HCT116 (cell line): ENCODE measurements at regions of chr15 and their contacts with region 1.

Region 1: DNA sequence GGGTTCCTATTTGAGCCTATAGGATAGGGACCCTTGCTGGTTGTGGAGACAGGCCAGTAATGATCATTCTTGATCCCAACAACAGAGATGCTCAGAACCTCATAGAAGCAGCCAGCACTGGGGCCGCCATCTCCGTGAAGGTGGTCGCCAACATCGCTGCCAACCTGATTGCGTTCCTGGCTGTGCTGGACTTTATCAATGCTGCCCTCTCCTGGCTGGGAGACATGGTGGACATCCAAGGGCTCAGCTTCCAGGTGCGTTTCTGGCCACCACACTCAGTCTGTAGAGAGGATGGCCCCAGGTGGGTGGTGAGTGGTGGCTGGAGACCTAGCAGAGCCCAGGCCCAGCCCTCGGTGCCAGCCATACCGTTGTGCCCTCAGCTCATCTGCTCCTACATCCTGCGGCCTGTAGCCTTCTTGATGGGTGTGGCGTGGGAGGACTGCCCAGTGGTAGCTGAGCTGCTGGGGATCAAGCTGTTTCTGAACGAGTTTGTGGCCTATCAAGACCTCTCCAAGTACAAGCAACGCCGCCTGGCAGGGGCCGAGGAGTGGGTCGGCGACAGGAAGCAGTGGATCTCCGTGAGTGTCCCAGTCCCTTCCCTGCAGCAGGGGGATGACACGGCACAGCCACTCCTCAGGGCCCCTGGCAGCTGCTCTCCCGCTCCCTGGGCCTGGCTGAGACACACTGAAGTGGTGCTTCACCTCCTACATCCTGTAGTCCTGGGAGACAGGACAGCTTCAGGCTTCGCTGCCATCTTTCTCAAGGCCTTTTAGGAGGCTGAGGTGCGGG is 46.5 kb upstream of the PDE8A start:
- DNase-seq: no peak
- ATAC-seq: peak; percentile 75
- H3K4me3 ChIP-seq: no peak overlapping the region
- H3K27ac ChIP-seq: no peak overlapping the region; the same call in 1 of the 2 replicates
- H3K4me1 ChIP-seq: peaks cover 6% of the 10 kb centered on the region in 2 experiments
- H3K27me3 ChIP-seq: no peaks in the 10 kb centered on the region
- CTCF ChIP-seq: peak; percentile 38 to 58 (median 44); a peak in 5 of 6 replicates
- POLR2A ChIP-seq: no peak
- RAD21 ChIP-seq: peak; percentile 71

Region 2: GRCh38 chr15:84658080-84658787 is 276.9 kb before region 1 on chr15 and contains the start of gene NMB:
- CTCF ChIA-PET with region 1: interaction called, 4 read pairs
- POLR2A ChIA-PET with region 1: no interaction called
- RAD21 ChIA-PET with region 1: no interaction called
- intact Hi-C with region 1: loop called (anchors 1 kb)
- DNase-seq: peak; percentile 24
- ATAC-seq: peak; percentile 50
- H3K4me3 ChIP-seq: peak within 1 kb of the TSS; percentile 31 to 56
- H3K27ac ChIP-seq: peak within 1 kb of the TSS; percentile 58
- H3K4me1 ChIP-seq: peaks cover 14 to 33% of the 10 kb centered on the region in 2 experiments
- H3K27me3 ChIP-seq: no peaks in the 10 kb centered on the region
- CTCF ChIP-seq: peak; percentile 14 to 30 (median 22); a peak in 3 of 6 replicates
- POLR2A ChIP-seq: no peak
- RAD21 ChIP-seq: no peak; the same call in 1 of the 2 replicates
- total RNA-seq, gene NMB: 9.8 TPM

Region 3: GRCh38 chr15:84826369-84826823 is 108.7 kb before region 1 on chr15:
- CTCF ChIA-PET with region 1: no interaction called
- POLR2A ChIA-PET with region 1: no interaction called
- RAD21 ChIA-PET with region 1: interaction called in 1 of 2 experiments, 3 read pairs
- intact Hi-C with region 1: loop called (anchors 2 kb)
- DNase-seq: peak; percentile 56
- ATAC-seq: peak; percentile 99
- H3K4me3 ChIP-seq: no peak overlapping the region
- H3K27ac ChIP-seq: no peak overlapping the region
- H3K4me1 ChIP-seq: peaks cover 0 to 12% of the 10 kb centered on the region in 2 experiments; a peak in 3 of 4 replicates
- H3K27me3 ChIP-seq: no peaks in the 10 kb centered on the region
- CTCF ChIP-seq: peak; percentile 80 to 92 (median 89)
- POLR2A ChIP-seq: no peak
- RAD21 ChIP-seq: peak; percentile 98

Region 4: DNA sequence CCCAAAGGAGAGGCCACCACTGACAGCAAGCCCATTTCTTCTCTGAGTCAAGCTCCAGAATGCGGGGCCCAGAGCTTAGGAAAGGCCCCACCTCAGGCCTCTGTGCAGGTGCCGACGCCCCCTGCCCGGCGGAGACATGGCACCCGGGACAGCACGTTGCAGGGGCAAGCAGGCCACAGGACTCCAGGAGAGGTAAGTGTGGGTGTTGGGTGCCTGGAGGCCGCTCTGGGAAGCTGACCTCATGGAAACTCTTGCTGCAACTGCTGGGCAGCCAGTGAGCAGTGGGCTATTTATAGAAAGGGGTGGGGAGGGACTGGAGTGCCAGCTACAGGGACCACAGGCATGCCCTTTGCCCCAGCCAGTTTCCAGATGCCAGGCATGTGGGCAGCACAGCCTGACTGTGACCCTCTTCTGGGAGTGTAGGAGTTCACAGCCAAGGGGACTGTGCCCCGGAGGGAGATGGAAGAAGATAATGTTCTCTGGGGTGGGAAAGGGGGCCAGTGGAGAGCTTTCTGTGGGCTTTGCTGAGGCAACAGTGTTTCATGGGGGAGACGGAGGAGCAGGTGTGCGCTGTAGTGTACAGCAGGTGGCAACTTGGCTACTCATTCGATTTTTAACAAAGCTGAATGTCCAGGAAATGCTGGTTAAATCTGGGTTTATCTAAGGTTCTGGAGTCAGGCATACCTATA is 94.2 kb before region 1 on chr15:
- CTCF ChIA-PET with region 1: no interaction called
- POLR2A ChIA-PET with region 1: interaction called, 3 read pairs
- RAD21 ChIA-PET with region 1: interaction called in 1 of 2 experiments, 3 read pairs
- intact Hi-C with region 1: loop called (anchors 2 kb)
- DNase-seq: peak; percentile 29
- ATAC-seq: peak; percentile 39; the same call in 1 of the 2 replicates
- H3K4me3 ChIP-seq: no peak overlapping the region
- H3K27ac ChIP-seq: peak overlapping the region; percentile 0; the same call in 1 of the 2 replicates
- H3K4me1 ChIP-seq: peaks cover 13 to 27% of the 10 kb centered on the region in 2 experiments
- H3K27me3 ChIP-seq: no peaks in the 10 kb centered on the region
- CTCF ChIP-seq: no peak
- POLR2A ChIP-seq: no peak
- RAD21 ChIP-seq: no peak

Region 5: DNA sequence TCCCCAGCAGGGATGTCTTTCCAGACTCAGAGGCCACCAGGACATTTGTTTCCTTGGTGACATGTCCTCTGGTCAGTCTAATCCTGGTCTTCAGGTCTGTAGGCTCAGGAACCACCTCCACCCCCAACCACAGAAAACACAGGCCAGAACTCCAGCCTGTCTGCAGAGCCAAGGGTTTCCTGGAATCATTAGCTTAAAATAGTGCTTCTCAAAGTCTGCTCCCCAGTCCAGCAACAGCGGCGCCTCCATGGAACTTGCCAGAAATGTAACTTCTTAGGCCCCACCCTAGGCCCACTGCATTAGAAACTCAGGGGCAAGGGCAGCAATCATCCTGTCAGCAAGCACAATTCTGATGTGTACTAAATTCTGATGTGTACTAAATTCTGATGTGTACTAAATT is 30.7 kb before region 1 on chr15:
- CTCF ChIA-PET with region 1: no interaction called
- POLR2A ChIA-PET with region 1: no interaction called
- RAD21 ChIA-PET with region 1: no interaction called
- intact Hi-C with region 1: no loop called
- DNase-seq: no peak
- ATAC-seq: no peak
- H3K4me3 ChIP-seq: no peak overlapping the region
- H3K27ac ChIP-seq: no peak overlapping the region
- H3K4me1 ChIP-seq: no peaks in the 10 kb centered on the region
- H3K27me3 ChIP-seq: no peaks in the 10 kb centered on the region
- CTCF ChIP-seq: no peak
- POLR2A ChIP-seq: no peak
- RAD21 ChIP-seq: no peak